ENCODE measurements at regions of chr20 and their contacts with region 1.

Region 1: DNA sequence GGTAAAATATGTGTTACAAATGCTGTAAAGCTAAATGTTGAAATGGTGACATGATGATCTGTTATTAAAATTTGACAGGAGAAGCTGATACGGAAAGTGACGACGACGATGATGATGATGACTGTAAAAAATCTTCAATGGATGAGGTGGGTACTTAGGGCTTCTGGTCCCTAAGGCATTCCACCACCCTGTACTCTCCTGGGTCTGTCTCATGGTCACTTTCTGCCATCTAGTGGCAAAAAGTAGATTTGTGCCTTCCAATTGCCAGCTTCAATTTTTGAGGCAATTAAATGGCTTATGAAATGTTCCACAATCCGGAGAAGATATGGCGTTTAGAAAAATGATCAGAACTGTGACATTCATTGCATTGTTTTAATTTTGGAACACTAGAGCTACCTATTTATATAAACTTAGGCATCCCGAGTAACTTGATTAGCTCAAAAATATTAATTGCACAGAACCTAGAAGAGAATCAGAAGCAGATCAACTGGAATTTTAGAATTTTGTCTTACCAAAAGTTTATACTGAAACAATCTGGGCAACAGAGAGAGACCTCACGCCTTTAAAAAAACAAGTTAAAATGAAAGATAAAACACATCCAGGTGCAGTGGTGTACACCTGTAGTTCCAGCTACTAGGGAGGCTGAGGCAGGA is 346.5 kb upstream of the PLCB4 start:
- DNase-seq: no peak
- ATAC-seq: peak; percentile 81

Region 2: GRCh38 chr20:7935027-7935551 is 787.3 kb before region 1 on chr20:
- intact Hi-C with region 1: loop called (anchors 5 kb)
- DNase-seq: no peak
- ATAC-seq: no peak

Region 3: GRCh38 chr20:8043687-8044282 is 678.6 kb before region 1 on chr20:
- intact Hi-C with region 1: loop called (anchors 2 kb)
- DNase-seq: peak; percentile 13
- ATAC-seq: peak; percentile 46

Region 4: GRCh38 chr20:8389381-8390036 is 332.9 kb before region 1 on chr20:
- intact Hi-C with region 1: loop called (anchors 5 kb)
- DNase-seq: peak; percentile 54
- ATAC-seq: peak; percentile 40

Region 5: DNA sequence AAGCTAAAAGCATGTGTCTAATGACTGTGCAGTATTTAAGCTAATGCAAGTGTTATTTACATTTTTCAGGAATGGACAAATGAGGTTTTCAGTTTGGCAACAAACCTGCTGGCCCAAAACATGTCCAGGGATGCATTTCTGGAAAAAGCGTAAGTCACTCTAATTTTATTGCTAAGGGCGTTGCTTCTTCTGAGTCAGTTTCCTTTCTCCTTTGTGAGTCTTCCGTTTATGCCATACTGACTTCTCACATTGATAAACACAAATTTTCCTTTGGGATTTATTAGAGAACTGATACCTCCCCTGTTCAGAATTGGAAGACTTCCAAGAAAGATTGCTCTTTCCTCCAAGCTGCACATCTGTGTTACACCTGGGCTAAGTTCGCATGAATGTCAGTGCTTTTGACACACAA is 76.4 kb before region 1 on chr20:
- intact Hi-C with region 1: no loop called
- DNase-seq: no peak
- ATAC-seq: no peak